HepG2 (cell line): ENCODE measurements at regions of chr6 and their contacts with region 1.

Region 1: DNA sequence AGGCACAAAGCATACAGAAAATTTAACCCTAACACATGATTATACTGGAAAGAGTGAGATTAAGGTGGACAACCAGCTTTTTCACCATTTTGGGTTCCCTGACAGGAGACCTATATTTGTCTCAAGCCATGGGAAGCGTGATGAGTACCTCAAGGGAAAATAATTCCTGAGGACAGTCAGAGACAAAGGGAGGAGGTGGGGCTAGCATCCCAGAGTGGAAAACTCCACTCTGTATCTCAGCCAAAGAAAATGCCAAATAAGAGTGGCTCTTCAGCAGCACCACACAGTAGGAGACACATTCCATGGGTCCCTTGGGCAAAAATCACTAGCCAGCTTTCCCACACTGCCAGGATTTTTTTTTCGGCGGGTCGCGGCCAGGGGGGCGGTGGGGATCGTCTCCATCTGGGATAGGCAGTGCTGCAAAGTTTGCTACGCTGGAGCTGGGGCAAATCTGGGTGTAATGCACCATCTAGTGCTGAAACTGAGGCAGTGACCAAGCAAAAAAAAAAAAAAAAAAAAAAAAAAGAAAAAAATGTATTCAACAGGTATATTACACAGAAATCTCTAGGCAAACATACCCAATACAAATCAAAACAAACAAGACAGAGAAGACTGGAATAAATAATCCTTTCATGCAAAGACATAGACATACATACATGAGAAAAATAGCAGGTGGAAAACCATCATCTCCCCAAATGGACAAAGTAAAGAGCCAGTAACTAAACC is 77.3 kb upstream of the SLC35F1 start:
- DNase-seq: peak; percentile 44
- ATAC-seq: peak; percentile 95
- H3K4me3 ChIP-seq: no peak overlapping the region; a peak in 1 of 6 replicates
- H3K27ac ChIP-seq: no peak overlapping the region
- H3K4me1 ChIP-seq: no peaks in the 10 kb centered on the region
- H3K27me3 ChIP-seq: no peaks in the 10 kb centered on the region
- CTCF ChIP-seq: peak; percentile 58
- EP300 ChIP-seq: no peak
- POLR2A ChIP-seq: no peak
- RAD21 ChIP-seq: no peak

Region 2: GRCh38 chr6:117346142-117346930 is 483.4 kb before region 1 on chr6:
- CTCF ChIA-PET with region 1: interaction called, 21 read pairs
- POLR2A ChIA-PET with region 1: no interaction called
- in situ Hi-C with region 1: loop called (anchors 5 kb)
- intact Hi-C with region 1: loop called (anchors 1 kb)
- DNase-seq: peak; percentile 23
- ATAC-seq: no peak
- H3K4me3 ChIP-seq: no peak overlapping the region
- H3K27ac ChIP-seq: no peak overlapping the region
- H3K4me1 ChIP-seq: no peaks in the 10 kb centered on the region; the same call in 1 of the 2 replicates
- H3K27me3 ChIP-seq: no peaks in the 10 kb centered on the region
- CTCF ChIP-seq: peak; percentile 36; the same call in 1 of the 2 replicates
- EP300 ChIP-seq: no peak
- POLR2A ChIP-seq: no peak
- RAD21 ChIP-seq: 0 out of 2 replicates have a peak, but pooled peaks have one; percentile 11

Region 3: DNA sequence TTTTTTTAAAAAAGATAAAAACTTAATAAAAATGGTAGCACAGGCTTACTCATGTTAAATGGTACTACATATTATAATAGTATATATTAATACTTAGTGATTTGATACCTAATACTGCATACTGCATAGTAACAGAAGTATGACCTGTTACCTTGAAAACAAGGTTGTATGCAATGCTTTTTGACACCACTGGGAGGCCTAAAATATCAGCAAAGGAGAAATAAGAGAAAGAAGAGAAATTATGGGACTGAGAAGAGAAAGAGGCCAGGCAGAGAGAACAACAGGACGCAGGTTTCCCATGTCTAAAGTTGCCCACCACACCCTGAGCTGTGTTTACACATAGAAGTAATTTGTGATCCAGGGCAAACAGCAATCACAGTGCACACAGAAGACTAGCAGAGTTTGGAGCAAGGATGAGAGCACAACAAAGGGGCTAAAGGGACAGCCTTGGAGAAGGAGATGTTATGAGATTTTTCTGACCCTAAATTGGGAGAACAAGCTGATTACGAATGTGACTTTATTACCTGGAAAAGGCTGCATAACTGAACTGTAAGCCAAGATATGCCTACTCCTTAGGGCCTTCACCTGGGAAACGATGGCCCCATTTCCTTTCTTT is 477.2 kb before region 1 on chr6:
- CTCF ChIA-PET with region 1: interaction called, 21 read pairs
- POLR2A ChIA-PET with region 1: no interaction called
- in situ Hi-C with region 1: loop called (anchors 5 kb)
- intact Hi-C with region 1: no loop called
- DNase-seq: peak; percentile 29
- ATAC-seq: peak; percentile 82
- H3K4me3 ChIP-seq: no peak overlapping the region
- H3K27ac ChIP-seq: no peak overlapping the region
- H3K4me1 ChIP-seq: no peaks in the 10 kb centered on the region
- H3K27me3 ChIP-seq: no peaks in the 10 kb centered on the region
- CTCF ChIP-seq: peak; percentile 53
- EP300 ChIP-seq: no peak
- POLR2A ChIP-seq: no peak
- RAD21 ChIP-seq: no peak

Region 4: GRCh38 chr6:117399924-117400323 is 429.8 kb before region 1 on chr6:
- CTCF ChIA-PET with region 1: no interaction called
- POLR2A ChIA-PET with region 1: no interaction called
- in situ Hi-C with region 1: no loop called
- intact Hi-C with region 1: loop called (anchors 5 kb)
- DNase-seq: peak; percentile 20
- ATAC-seq: peak; percentile 81
- H3K4me3 ChIP-seq: no peak overlapping the region
- H3K27ac ChIP-seq: no peak overlapping the region
- H3K4me1 ChIP-seq: peaks cover 7% of the 10 kb centered on the region; the same call in 1 of the 2 replicates
- H3K27me3 ChIP-seq: no peaks in the 10 kb centered on the region
- CTCF ChIP-seq: peak; percentile 51
- EP300 ChIP-seq: no peak
- POLR2A ChIP-seq: no peak
- RAD21 ChIP-seq: no peak

Region 5: GRCh38 chr6:118580585-118581419 is 751.0 kb after region 1 on chr6:
- CTCF ChIA-PET with region 1: no interaction called
- POLR2A ChIA-PET with region 1: no interaction called
- in situ Hi-C with region 1: loop called (anchors 25 kb)
- intact Hi-C with region 1: no loop called
- DNase-seq: peak; percentile 75
- ATAC-seq: peak; percentile 97
- H3K4me3 ChIP-seq: no peak overlapping the region
- H3K27ac ChIP-seq: no peak overlapping the region
- H3K4me1 ChIP-seq: no peaks in the 10 kb centered on the region
- H3K27me3 ChIP-seq: no peaks in the 10 kb centered on the region; a peak in 1 of 5 replicates
- CTCF ChIP-seq: peak; percentile 92
- EP300 ChIP-seq: no peak
- POLR2A ChIP-seq: no peak
- RAD21 ChIP-seq: peak; percentile 88